ENCODE measurements at regions of chr6 and their contacts with region 1.

Region 1: DNA sequence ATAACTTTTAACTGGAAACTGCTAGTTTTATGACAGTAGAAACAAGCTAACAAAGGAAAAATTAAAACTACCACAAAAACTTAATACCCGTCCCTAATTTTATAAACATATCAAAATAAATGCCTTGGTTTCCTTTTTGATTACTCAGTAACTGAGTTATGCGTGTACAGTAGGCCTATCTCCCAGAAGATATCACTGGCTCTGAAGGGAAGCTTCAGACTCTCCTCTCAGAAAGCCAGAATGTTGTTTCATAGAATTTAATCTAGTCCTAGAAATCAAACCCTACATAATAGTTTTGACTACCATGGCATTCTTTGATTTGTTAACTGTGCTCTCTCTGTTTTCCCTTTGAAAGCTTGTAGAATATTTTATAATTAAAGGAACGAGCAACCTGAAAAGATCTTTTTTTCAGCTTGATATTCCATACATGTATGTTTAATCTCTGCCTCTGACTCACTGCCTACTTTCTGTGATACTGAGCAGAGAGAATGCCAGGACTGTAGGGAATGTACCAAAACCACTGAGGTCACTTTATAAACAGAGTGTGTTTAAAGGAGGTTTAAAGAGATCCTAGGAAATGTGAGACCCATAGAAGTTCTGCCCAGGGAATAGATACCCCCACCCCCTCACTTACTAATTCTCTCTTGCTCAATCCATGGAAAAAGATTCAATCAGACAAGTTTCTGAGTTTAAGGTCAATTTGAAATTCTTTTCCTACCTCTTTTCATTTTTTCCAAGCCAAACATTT is 311.5 kb downstream of the HDGFL1 start:
- DNase-seq: peak; percentile 39 to 94
- H3K4me3 ChIP-seq: no peak overlapping the region
- H3K27ac ChIP-seq: peak overlapping the region; percentile 95
- H3K4me1 ChIP-seq: peaks cover 17% of the 10 kb centered on the region
- H3K27me3 ChIP-seq: no peaks in the 10 kb centered on the region
- CTCF ChIP-seq: no peak

Region 2: DNA sequence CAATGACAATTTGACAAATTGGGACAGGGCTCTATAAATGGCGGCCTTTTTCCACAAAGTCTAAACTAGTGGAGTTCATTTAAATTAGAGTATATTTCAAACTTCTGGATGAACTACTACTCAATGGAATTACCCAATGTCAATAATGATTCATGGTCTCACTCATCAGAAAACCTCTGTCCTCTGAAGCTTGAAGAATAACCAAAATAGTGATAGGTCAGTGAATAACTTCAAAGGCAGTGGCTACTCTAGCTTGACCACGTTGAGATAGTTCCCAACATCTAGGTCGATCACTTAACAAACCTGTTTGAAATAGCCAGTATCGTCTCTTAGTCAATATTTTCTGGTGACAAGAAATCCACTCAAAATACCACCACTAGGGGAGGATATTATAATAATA is 113.9 kb before region 1 on chr6:
- CTCF ChIA-PET with region 1: no interaction called
- POLR2A ChIA-PET with region 1: interaction called, 14 read pairs
- intact Hi-C with region 1: no loop called
- DNase-seq: peak in 1 of 2 experiments; percentile 46
- H3K4me3 ChIP-seq: no peak overlapping the region
- H3K27ac ChIP-seq: no peak overlapping the region
- H3K4me1 ChIP-seq: peaks cover 5% of the 10 kb centered on the region; the same call in 1 of the 2 replicates
- H3K27me3 ChIP-seq: no peaks in the 10 kb centered on the region
- CTCF ChIP-seq: no peak

Region 3: DNA sequence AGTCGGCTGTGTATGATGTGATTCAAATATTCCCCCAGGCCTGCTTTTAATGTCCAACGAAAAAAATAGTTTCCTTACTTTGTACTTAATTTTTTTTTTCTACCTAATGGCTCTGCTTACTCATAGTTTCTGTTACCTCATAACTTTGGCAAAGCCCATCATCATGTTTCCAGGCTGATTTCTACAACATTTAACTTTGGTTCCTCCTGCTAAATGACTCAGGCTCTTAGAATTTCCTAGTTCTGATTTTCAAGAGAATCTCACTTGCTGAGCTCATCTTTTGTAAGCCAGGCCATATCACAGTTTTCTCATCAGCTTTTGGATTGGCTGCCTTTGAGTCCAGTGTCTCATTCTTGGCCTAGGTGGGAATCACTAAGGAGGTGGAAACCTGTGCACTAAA is 11.6 kb after region 1 on chr6:
- CTCF ChIA-PET with region 1: interaction called, 4 read pairs
- POLR2A ChIA-PET with region 1: interaction called, 7 read pairs
- intact Hi-C with region 1: loop called (anchors 1 kb)
- DNase-seq: peak; percentile 53 to 89
- H3K4me3 ChIP-seq: no peak overlapping the region
- H3K27ac ChIP-seq: peak overlapping the region; percentile 90
- H3K4me1 ChIP-seq: peaks cover 25% of the 10 kb centered on the region
- H3K27me3 ChIP-seq: no peaks in the 10 kb centered on the region
- CTCF ChIP-seq: no peak